ENCODE measurements at regions of chr10 and their contacts with region 1.

Region 1: DNA sequence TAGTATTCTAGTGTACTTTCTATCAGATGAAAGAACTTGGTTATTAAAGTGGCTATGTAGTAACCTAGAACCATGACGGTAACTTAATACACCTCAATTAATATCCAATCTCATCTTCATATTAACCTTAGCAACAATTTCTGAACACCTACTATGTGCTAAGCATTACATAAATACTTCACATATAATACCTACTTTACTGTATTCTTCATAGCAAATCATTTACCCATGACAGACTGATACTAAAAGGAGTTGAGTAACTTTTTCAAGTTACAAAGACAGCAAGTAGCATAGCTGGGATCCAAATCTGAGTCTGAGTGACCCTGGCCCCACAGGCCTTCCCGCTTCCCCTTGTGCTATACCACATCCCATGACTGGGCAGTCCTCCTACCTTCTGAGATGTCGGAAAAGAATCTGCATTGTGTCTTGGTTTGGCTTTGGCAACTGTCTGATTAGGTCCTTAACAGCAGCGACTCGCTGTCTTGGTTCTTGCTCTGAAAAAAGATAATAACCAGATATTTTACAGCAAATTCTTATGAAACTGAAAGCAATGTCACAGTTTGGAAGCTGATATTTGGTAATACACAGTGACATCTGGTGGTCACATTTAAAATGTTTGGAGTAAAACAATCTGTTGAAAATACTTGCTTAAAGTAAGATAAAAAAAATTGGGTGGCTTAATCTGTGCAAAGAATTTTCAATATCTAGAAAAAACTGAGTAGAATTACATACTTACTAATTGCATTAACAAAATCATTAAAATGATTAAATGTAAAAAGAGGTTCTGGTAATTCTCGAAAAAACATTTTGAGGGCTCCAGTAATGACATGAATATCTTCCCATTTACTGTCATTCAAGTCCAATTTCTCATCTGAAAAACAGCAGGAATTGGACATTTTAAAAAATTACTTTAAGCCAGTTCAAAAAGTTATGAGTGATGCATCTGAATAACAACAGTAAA is 120.1 kb downstream of the ARHGAP12 start:
- DNase-seq: peak; percentile 11
- H3K4me3 ChIP-seq: peak overlapping the region in 1 of 4 donors; percentile 10
- H3K27ac ChIP-seq: peak overlapping the region; percentile 50 to 70 (median 60)
- H3K4me1 ChIP-seq: peaks cover 0 to 9% (median 4%) of the 10 kb centered on the region in 4 donors
- H3K27me3 ChIP-seq: no peaks in the 10 kb centered on the region
- CTCF ChIP-seq: peak; percentile 47 to 73 (median 60)
- EP300 ChIP-seq: no peak
- POLR2A ChIP-seq: no peak

Region 2: GRCh38 chr10:30722956-30723620 is 1085.5 kb before region 1 on chr10:
- in situ Hi-C with region 1: loop called in 2 of 4 experiments (anchors 10 to 25 kb)
- intact Hi-C with region 1: no loop called
- DNase-seq: no peak
- H3K4me3 ChIP-seq: no peak overlapping the region
- H3K27ac ChIP-seq: no peak overlapping the region
- H3K4me1 ChIP-seq: peaks cover 0 to 6% (median 2%) of the 10 kb centered on the region in 4 donors
- H3K27me3 ChIP-seq: no peaks in the 10 kb centered on the region
- CTCF ChIP-seq: no peak
- EP300 ChIP-seq: no peak
- POLR2A ChIP-seq: no peak

Region 3: DNA sequence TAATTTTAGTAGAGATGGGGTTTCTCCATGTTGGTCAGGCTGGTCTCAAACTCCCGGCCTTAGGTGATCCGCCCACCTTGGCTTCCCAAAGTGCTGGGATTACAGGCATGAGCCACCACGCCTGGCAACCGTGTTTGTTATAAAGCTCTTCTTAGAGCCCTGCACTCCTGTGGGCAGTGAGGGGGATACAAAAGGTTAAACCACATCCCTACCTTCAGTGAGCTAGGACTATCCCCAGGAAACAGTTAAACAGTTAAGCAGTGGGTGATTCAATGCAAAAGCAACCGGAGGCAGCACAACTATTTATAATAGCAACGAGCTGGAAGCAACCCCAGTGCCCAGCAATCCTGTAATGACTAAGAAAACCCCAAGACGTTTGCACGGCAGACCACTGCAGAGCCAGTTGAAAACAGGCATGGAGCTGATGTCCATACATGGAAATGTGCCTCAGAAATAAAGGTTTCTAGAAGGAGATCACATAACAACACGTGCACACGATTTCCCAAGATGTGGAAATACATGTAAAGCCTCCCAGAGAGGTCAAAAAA is 1071.8 kb before region 1 on chr10:
- in situ Hi-C with region 1: loop called in 1 of 4 experiments (anchors 25 kb)
- intact Hi-C with region 1: no loop called
- DNase-seq: peak; percentile 38
- H3K4me3 ChIP-seq: no peak overlapping the region
- H3K27ac ChIP-seq: peak overlapping the region; percentile 38 to 62 (median 60)
- H3K4me1 ChIP-seq: peaks cover 0 to 6% (median 5%) of the 10 kb centered on the region in 4 donors
- H3K27me3 ChIP-seq: no peaks in the 10 kb centered on the region
- CTCF ChIP-seq: no peak
- EP300 ChIP-seq: peak; percentile 77
- POLR2A ChIP-seq: no peak

Region 4: GRCh38 chr10:31603235-31604087 is 205.1 kb before region 1 on chr10:
- in situ Hi-C with region 1: no loop called
- intact Hi-C with region 1: loop called (anchors 5 kb)
- DNase-seq: peak; percentile 91
- H3K4me3 ChIP-seq: peak overlapping the region; percentile 39 to 64 (median 56)
- H3K27ac ChIP-seq: peak overlapping the region; percentile 83 to 92 (median 84)
- H3K4me1 ChIP-seq: peaks cover 3 to 22% (median 12%) of the 10 kb centered on the region in 4 donors
- H3K27me3 ChIP-seq: no peaks in the 10 kb centered on the region
- CTCF ChIP-seq: peak in 1 of 5 experiments; percentile 14
- EP300 ChIP-seq: no peak
- POLR2A ChIP-seq: peak; percentile 45

Measured in transverse colon (tissue), 4 donors.